ENCODE measurements at regions of chr1 and their contacts with region 1.

Region 1: GRCh38 chr1:10430216-10431069 is at the start of gene CENPS:
- DNase-seq: peak; percentile 77 to 92 (median 87)
- H3K4me3 ChIP-seq: peak within 1 kb of the TSS; percentile 63 to 96
- H3K4me3 Mint-ChIP-seq: peak within 1 kb of the TSS; percentile 83 to 92 (median 91)
- H3K27ac ChIP-seq: peak within 1 kb of the TSS; percentile 83
- H3K27ac Mint-ChIP-seq: peak within 1 kb of the TSS; percentile 93 to 98 (median 95)
- H3K4me1 ChIP-seq: peaks cover 30% of the 10 kb centered on the region
- H3K4me1 Mint-ChIP-seq: peaks cover 13 to 37% (median 18%) of the 10 kb centered on the region in 4 donors
- H3K27me3 ChIP-seq: no peaks in the 10 kb centered on the region
- H3K27me3 Mint-ChIP-seq: no peaks in the 10 kb centered on the region
- total RNA-seq, gene CENPS: 7.2 to 7.9 TPM

Region 2: GRCh38 chr1:9874959-9875635 is 555.3 kb before region 1 on chr1:
- CTCF ChIA-PET with region 1: interaction called, 6 read pairs
- POLR2A ChIA-PET with region 1: no interaction called
- intact Hi-C with region 1: loop called (anchors 1 kb)
- DNase-seq: peak; percentile 65 to 72 (median 66)
- H3K4me3 ChIP-seq: no peak overlapping the region
- H3K4me3 Mint-ChIP-seq: peak overlapping the region in 1 of 8 donors; percentile 31
- H3K27ac ChIP-seq: no peak overlapping the region
- H3K27ac Mint-ChIP-seq: peak overlapping the region in 4 of 7 donors; percentile 18 to 36 (median 32)
- H3K4me1 ChIP-seq: no peaks in the 10 kb centered on the region
- H3K4me1 Mint-ChIP-seq: peaks cover 0 to 5% (median 3%) of the 10 kb centered on the region in 4 donors
- H3K27me3 ChIP-seq: no peaks in the 10 kb centered on the region
- H3K27me3 Mint-ChIP-seq: no peaks in the 10 kb centered on the region

Region 3: GRCh38 chr1:10032590-10033358 is 397.7 kb before region 1 on chr1 and contains the start of gene UBE4B:
- CTCF ChIA-PET with region 1: no interaction called
- POLR2A ChIA-PET with region 1: interaction called, 4 read pairs
- intact Hi-C with region 1: loop called (anchors 2 kb)
- DNase-seq: peak; percentile 99 to 100 (median 99)
- H3K4me3 ChIP-seq: peak within 1 kb of the TSS; percentile 92 to 96
- H3K4me3 Mint-ChIP-seq: peak within 1 kb of the TSS; percentile 93 to 98 (median 95)
- H3K27ac ChIP-seq: peak within 1 kb of the TSS; percentile 84
- H3K27ac Mint-ChIP-seq: peak within 1 kb of the TSS; percentile 92 to 98 (median 97)
- H3K4me1 ChIP-seq: peaks cover 22% of the 10 kb centered on the region
- H3K4me1 Mint-ChIP-seq: peaks cover 15 to 32% (median 25%) of the 10 kb centered on the region in 4 donors
- H3K27me3 ChIP-seq: no peaks in the 10 kb centered on the region
- H3K27me3 Mint-ChIP-seq: peaks cover 0 to 1% of the 10 kb centered on the region in 2 donors
- total RNA-seq, gene UBE4B: 44.1 to 47.6 TPM

Region 4: GRCh38 chr1:10398734-10399623 is 31.5 kb before region 1 on chr1 and contains the start of gene PGD:
- CTCF ChIA-PET with region 1: interaction called, 12 read pairs
- POLR2A ChIA-PET with region 1: interaction called, 3 read pairs
- intact Hi-C with region 1: loop called (anchors 1 kb)
- DNase-seq: peak; percentile 94 to 98 (median 95)
- H3K4me3 ChIP-seq: peak within 1 kb of the TSS; percentile 81 to 94
- H3K4me3 Mint-ChIP-seq: peak within 1 kb of the TSS; percentile 93 to 97 (median 95)
- H3K27ac ChIP-seq: peak within 1 kb of the TSS; percentile 76
- H3K27ac Mint-ChIP-seq: peak within 1 kb of the TSS; percentile 81 to 93 (median 86)
- H3K4me1 ChIP-seq: peaks cover 20% of the 10 kb centered on the region
- H3K4me1 Mint-ChIP-seq: peaks cover 8 to 24% (median 18%) of the 10 kb centered on the region in 4 donors
- H3K27me3 ChIP-seq: no peaks in the 10 kb centered on the region
- H3K27me3 Mint-ChIP-seq: no peaks in the 10 kb centered on the region
- total RNA-seq, gene PGD: 32.8 to 37.0 TPM

Region 5: GRCh38 chr1:10494754-10495474 is 64.5 kb after region 1 on chr1:
- CTCF ChIA-PET with region 1: interaction called, 76 read pairs
- POLR2A ChIA-PET with region 1: interaction called, 18 read pairs
- intact Hi-C with region 1: loop called (anchors 1 kb)
- DNase-seq: peak; percentile 71 to 75 (median 75)
- H3K4me3 ChIP-seq: peak overlapping the region; percentile 77 to 88
- H3K4me3 Mint-ChIP-seq: peak overlapping the region; percentile 82 to 92 (median 88)
- H3K27ac ChIP-seq: peak overlapping the region; percentile 53
- H3K27ac Mint-ChIP-seq: peak overlapping the region; percentile 58 to 96 (median 93)
- H3K4me1 ChIP-seq: peaks cover 21% of the 10 kb centered on the region
- H3K4me1 Mint-ChIP-seq: peaks cover 21 to 36% (median 29%) of the 10 kb centered on the region in 4 donors
- H3K27me3 ChIP-seq: no peaks in the 10 kb centered on the region
- H3K27me3 Mint-ChIP-seq: no peaks in the 10 kb centered on the region

Region 6: DNA sequence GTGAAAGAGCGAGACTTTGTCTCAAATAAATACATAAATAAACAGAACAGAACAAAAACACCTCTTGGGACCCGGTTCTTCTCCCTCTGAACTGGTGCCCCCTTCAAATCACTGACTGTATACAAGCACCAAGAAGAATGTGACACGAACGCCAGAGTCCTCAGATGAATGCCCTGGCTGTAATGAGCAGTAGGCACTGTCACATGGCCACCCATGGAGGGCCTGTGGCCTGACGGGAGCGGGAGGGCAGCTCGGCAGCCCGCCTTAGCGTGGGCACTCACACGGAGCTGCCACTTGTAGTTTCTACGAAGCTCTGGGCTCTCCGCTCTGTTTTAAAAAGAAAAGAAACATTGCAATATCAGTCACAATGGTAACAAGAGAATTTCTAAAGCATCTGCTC is 190.3 kb after region 1 on chr1:
- CTCF ChIA-PET with region 1: no interaction called
- POLR2A ChIA-PET with region 1: no interaction called
- intact Hi-C with region 1: no loop called
- DNase-seq: no peak
- H3K4me3 ChIP-seq: no peak overlapping the region
- H3K4me3 Mint-ChIP-seq: no peak overlapping the region
- H3K27ac ChIP-seq: no peak overlapping the region
- H3K27ac Mint-ChIP-seq: no peak overlapping the region
- H3K4me1 ChIP-seq: no peaks in the 10 kb centered on the region
- H3K4me1 Mint-ChIP-seq: no peaks in the 10 kb centered on the region
- H3K27me3 ChIP-seq: no peaks in the 10 kb centered on the region
- H3K27me3 Mint-ChIP-seq: no peaks in the 10 kb centered on the region

Region 7: GRCh38 chr1:11645670-11646265 is 1215.3 kb after region 1 on chr1:
- CTCF ChIA-PET with region 1: no interaction called
- POLR2A ChIA-PET with region 1: no interaction called
- intact Hi-C with region 1: loop called (anchors 5 kb)
- DNase-seq: peak; percentile 71 to 75 (median 73)
- H3K4me3 ChIP-seq: no peak overlapping the region
- H3K4me3 Mint-ChIP-seq: no peak overlapping the region
- H3K27ac ChIP-seq: no peak overlapping the region
- H3K27ac Mint-ChIP-seq: no peak overlapping the region
- H3K4me1 ChIP-seq: peaks cover 15% of the 10 kb centered on the region
- H3K4me1 Mint-ChIP-seq: peaks cover 5 to 21% (median 12%) of the 10 kb centered on the region in 4 donors
- H3K27me3 ChIP-seq: no peaks in the 10 kb centered on the region
- H3K27me3 Mint-ChIP-seq: peaks cover 0 to 2% of the 10 kb centered on the region in 2 donors

Measured in CD4-positive, alpha-beta memory T cell (primary cell).